Mammary epithelial cell (primary cell): ENCODE measurements at regions of chr17 and their contacts with region 1.

Region 1: GRCh38 chr17:74961657-74962490 is 10.7 kb downstream of the HID1 start:
- DNase-seq: peak; percentile 71
- H3K4me3 ChIP-seq: no peak overlapping the region
- H3K27ac ChIP-seq: no peak overlapping the region
- H3K4me1 ChIP-seq: peaks cover 18% of the 10 kb centered on the region
- H3K27me3 ChIP-seq: no peaks in the 10 kb centered on the region
- CTCF ChIP-seq: peak; percentile 63 to 74

Region 2: GRCh38 chr17:74790161-74791054 is 171.5 kb before region 1 on chr17:
- CTCF ChIA-PET with region 1: no interaction called
- dilution Hi-C with region 1: no loop called
- in situ Hi-C with region 1: no loop called
- intact Hi-C with region 1: loop called (anchors 1 kb)
- DNase-seq: no peak
- H3K4me3 ChIP-seq: no peak overlapping the region
- H3K27ac ChIP-seq: no peak overlapping the region
- H3K4me1 ChIP-seq: no peaks in the 10 kb centered on the region
- H3K27me3 ChIP-seq: no peaks in the 10 kb centered on the region
- CTCF ChIP-seq: no peak

Region 3: DNA sequence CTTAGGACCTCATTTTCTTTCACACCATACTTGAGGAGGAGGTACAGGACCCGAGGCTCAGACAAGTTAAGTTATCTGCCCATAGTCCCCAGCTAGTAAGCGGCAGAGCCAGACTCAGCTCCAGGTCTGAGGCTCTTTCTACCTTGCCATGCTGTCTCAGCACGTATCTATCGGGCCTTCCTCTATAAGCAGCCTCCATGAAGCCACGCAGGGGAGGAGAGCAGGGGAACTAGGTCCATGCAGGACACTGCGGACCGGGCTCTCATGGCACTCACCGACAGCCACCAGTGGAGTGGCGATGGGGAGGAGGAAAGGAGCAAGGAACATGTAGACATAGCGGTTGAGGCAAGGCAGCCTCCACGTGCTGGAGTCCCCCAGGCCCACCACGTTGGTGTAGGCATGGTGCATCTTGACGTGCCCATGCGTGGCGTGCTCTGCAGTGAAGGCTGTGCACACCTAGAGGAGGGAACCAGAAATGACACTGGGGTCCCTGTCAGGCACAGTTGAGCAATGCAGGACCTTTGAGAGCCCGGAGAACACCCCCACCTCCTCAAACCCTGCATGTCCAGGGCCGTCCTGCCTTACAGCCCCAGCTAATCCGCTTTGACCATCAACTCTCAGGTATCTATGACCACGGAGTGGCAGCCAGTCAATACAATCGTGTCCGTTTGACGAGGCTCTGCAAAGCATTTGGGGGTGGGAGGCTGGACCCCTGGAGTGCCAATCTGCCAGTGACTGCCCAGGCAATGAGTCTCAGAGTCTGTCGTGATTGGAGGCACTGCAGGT is 79.4 kb before region 1 on chr17:
- CTCF ChIA-PET with region 1: no interaction called
- dilution Hi-C with region 1: no loop called
- in situ Hi-C with region 1: no loop called
- intact Hi-C with region 1: no loop called
- DNase-seq: no peak
- H3K4me3 ChIP-seq: no peak overlapping the region
- H3K27ac ChIP-seq: no peak overlapping the region
- H3K4me1 ChIP-seq: peaks cover 7% of the 10 kb centered on the region
- H3K27me3 ChIP-seq: no peaks in the 10 kb centered on the region
- CTCF ChIP-seq: no peak

Region 4: DNA sequence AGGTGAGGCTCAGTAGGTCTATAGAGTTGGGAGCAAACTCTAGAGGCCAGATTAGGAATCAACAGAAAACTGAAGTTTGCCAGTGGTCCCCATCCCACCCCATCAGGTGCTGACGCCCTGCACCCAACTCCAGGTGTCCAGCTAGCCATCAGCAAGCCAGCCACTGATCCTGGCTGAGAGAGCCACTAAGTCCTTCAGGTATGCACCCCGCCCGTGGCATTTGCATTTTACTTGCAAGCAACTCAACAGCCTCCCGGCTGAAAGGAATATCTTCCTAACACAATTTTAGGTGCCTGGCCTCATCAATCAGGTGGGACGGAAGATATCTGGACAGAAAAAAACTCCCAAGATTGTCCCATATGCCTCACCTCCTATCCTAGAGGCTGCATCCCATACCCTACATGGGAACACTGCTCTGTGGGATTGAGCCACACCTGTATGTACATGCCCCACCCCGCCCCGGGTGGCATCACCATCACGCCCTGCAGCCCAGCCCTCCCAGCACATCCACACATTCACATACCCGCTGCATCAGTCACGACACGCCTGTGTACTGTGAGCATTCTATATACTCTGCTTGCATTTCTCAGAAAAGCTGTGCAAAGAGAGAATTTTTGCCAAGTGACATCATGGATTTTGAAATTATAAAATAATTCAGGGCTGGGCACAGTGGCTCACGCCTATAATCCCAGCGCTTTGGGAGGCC is 17.9 kb before region 1 on chr17:
- CTCF ChIA-PET with region 1: interaction called, 4 read pairs
- dilution Hi-C with region 1: no loop called
- in situ Hi-C with region 1: no loop called
- intact Hi-C with region 1: loop called (anchors 1 kb)
- DNase-seq: peak; percentile 94
- H3K4me3 ChIP-seq: no peak overlapping the region
- H3K27ac ChIP-seq: peak overlapping the region; percentile 79
- H3K4me1 ChIP-seq: peaks cover 18% of the 10 kb centered on the region
- H3K27me3 ChIP-seq: no peaks in the 10 kb centered on the region
- CTCF ChIP-seq: no peak

Region 5: GRCh38 chr17:75012346-75013091 is 50.6 kb after region 1 on chr17 and contains the start of gene MRPL58:
- CTCF ChIA-PET with region 1: interaction called, 8 read pairs
- dilution Hi-C with region 1: no loop called
- in situ Hi-C with region 1: no loop called
- intact Hi-C with region 1: loop called (anchors 1 kb)
- DNase-seq: peak; percentile 79
- H3K4me3 ChIP-seq: peak within 1 kb of the TSS; percentile 75 to 86 (median 83)
- H3K27ac ChIP-seq: peak within 1 kb of the TSS; percentile 79
- H3K4me1 ChIP-seq: peaks cover 19% of the 10 kb centered on the region
- H3K27me3 ChIP-seq: no peaks in the 10 kb centered on the region
- CTCF ChIP-seq: peak; percentile 13 to 67
- total RNA-seq, gene MRPL58: 22.2 to 43.2 TPM

Region 6: GRCh38 chr17:75109407-75110233 is 147.7 kb after region 1 on chr17 and contains the start of gene ARMC7:
- CTCF ChIA-PET with region 1: no interaction called
- dilution Hi-C with region 1: no loop called
- in situ Hi-C with region 1: no loop called
- intact Hi-C with region 1: loop called (anchors 1 kb)
- DNase-seq: peak; percentile 80
- H3K4me3 ChIP-seq: peak within 1 kb of the TSS; percentile 71 to 85 (median 79)
- H3K27ac ChIP-seq: peak within 1 kb of the TSS; percentile 16
- H3K4me1 ChIP-seq: peaks cover 15% of the 10 kb centered on the region
- H3K27me3 ChIP-seq: no peaks in the 10 kb centered on the region
- CTCF ChIP-seq: no peak
- total RNA-seq, gene ARMC7: 2.8 to 8.3 TPM

Region 7: GRCh38 chr17:75205037-75205792 is 243.3 kb after region 1 on chr17 and contains the start of gene NUP85:
- CTCF ChIA-PET with region 1: interaction called, 9 read pairs
- dilution Hi-C with region 1: no loop called
- in situ Hi-C with region 1: loop called (anchors 10 kb)
- intact Hi-C with region 1: loop called (anchors 1 kb)
- DNase-seq: peak; percentile 91
- H3K4me3 ChIP-seq: peak within 1 kb of the TSS; percentile 67 to 98 (median 96)
- H3K27ac ChIP-seq: peak within 1 kb of the TSS; percentile 91
- H3K4me1 ChIP-seq: no peaks in the 10 kb centered on the region
- H3K27me3 ChIP-seq: no peaks in the 10 kb centered on the region
- CTCF ChIP-seq: no peak
- total RNA-seq, gene NUP85: 28.2 to 60.8 TPM